ENCODE measurements at regions of chr2 and their contacts with region 1.

Region 1: GRCh38 chr2:42663106-42663780 is 94.8 kb downstream of the MTA3 start:
- DNase-seq: no peak

Region 2: GRCh38 chr2:42494355-42495233 is 168.6 kb before region 1 on chr2:
- intact Hi-C with region 1: loop called (anchors 1 kb)
- DNase-seq: no peak

Region 3: GRCh38 chr2:42513257-42513918 is 149.9 kb before region 1 on chr2:
- intact Hi-C with region 1: loop called (anchors 5 kb)
- DNase-seq: no peak

Measured in cardiac septum (tissue), 1 donor.